HEK293 (cell line): ENCODE measurements at regions of chr13 and their contacts with region 1.

Region 1: DNA sequence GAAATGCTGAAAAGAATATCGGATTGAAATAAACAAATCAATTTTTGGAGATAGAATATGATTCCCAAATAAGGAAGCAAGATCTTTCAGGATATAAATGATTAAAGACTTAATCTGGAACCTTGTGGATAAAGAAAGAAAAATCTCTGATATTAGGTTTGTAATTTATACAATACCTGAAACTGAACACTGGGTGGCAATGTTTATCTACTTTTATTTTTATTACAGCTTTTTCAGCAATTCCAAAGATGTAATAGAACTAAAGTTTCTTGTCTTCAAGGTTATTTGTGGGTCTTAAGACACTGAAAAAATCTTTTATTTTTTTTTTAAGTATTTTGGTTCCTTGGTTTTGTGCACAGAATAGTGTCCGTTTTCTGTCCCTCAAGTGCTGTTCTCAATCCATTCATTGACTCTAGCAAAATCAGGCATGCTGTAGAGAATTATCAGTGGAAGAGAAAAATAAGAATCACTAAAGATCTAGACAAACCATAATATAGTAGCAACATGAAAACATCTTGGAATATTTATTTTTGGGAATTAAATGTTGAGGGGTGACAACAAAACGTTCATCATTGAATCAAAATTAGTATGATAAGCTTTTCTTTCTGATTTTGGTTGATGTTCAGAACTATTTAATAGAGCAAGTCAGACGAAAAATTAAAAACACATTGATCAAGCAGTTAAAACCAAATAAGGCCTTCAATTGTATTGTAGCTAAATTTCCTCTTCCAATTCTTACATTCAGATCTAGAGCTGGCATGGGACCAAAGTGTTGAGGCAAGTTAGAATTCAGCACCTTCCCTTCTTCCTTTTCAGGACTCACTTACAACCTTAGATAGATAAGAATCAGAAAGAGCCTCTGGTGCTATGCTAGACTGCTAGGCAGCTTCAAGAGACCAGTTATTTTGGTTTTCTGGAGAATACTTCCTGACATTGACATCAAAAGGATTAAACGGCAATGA is 704.4 kb upstream of the PCDH20 start:
- H3K4me3 ChIP-seq: no peak overlapping the region
- H3K27ac ChIP-seq: no peak overlapping the region
- H3K4me1 ChIP-seq: no peaks in the 10 kb centered on the region
- CTCF ChIP-seq: no peak

Region 2: GRCh38 chr13:61900033-61900432 is 220.0 kb before region 1 on chr13:
- CTCF ChIA-PET with region 1: no interaction called
- POLR2A ChIA-PET with region 1: no interaction called
- H3K4me3 ChIP-seq: no peak overlapping the region
- H3K27ac ChIP-seq: no peak overlapping the region
- H3K4me1 ChIP-seq: no peaks in the 10 kb centered on the region
- CTCF ChIP-seq: no peak

Region 3: DNA sequence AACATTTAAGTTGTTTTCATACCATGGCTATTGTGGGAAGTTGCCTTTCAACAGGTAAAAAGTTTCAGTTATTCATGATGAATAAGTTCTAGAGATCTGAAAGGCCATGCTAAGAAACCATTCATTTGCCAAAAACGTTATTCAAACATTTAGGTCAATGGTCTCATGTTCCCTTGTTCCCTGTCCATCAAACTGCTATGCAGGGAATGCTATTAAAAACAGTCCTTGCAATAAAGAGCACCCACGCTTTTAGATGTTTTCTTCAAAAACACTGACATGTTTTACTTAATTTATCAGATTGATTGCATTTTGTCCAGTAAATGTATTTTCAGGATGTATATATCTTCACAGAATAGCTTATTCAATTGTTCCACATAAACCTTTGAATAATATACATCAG is 131.2 kb before region 1 on chr13:
- CTCF ChIA-PET with region 1: no interaction called
- POLR2A ChIA-PET with region 1: no interaction called
- H3K4me3 ChIP-seq: no peak overlapping the region
- H3K27ac ChIP-seq: no peak overlapping the region
- H3K4me1 ChIP-seq: no peaks in the 10 kb centered on the region
- CTCF ChIP-seq: no peak

Region 4: DNA sequence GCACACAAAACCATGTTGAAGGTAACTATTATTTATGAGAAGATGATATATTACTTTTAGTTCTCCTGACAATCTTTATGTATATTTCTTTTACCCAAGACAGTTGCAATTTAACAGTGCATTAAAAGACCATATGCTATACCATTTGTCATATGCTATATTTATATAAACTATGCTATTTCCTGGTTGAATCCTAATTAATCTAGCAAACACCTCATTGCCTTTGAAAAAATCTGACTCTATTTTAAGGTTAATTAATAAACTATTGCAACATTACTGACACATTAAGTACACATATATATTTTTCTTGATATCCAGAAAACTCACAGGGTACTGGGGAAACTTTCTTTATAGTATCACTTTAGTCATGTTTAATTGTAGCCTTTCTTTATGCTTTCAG is 55.0 kb before region 1 on chr13:
- CTCF ChIA-PET with region 1: no interaction called
- POLR2A ChIA-PET with region 1: no interaction called
- H3K4me3 ChIP-seq: no peak overlapping the region
- H3K27ac ChIP-seq: no peak overlapping the region
- H3K4me1 ChIP-seq: no peaks in the 10 kb centered on the region
- CTCF ChIP-seq: no peak

Region 5: DNA sequence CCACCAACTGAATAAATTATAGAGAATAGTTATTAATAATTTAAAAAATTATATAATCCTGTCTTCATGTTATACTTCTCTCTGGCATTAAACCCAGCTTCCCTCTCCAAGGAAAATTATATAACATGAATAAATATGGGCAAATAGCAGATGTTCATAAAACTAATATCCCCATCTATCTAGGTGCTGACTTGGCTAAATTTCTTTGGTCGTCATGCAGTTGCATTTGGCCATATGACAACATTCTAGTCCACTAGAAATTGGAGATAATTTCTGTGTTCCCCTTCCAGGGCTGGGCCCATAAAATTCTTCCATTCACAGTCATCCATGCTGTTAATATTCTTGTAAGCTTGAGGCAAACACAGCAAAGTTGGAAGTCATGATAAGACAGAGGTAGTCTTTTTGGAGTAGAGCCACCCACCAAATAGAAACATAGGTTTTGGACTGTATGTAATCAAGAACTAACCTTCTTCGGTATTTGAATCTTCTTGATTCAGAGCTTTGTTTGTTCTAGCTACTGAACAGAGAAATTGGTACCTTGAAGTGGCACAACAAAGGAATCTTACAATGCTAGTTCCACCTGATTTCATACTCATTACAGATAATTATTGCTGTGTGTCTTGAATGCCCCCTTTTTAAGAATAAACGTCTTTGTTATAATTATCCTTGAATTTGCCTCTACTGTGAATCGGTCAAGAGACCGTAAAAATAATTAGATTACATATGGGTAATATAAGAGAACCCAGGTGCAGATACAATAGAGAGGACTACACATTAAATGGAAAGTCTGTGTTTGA is 25.8 kb before region 1 on chr13:
- CTCF ChIA-PET with region 1: no interaction called
- POLR2A ChIA-PET with region 1: no interaction called
- H3K4me3 ChIP-seq: no peak overlapping the region
- H3K27ac ChIP-seq: no peak overlapping the region
- H3K4me1 ChIP-seq: no peaks in the 10 kb centered on the region
- CTCF ChIP-seq: no peak

Region 6: DNA sequence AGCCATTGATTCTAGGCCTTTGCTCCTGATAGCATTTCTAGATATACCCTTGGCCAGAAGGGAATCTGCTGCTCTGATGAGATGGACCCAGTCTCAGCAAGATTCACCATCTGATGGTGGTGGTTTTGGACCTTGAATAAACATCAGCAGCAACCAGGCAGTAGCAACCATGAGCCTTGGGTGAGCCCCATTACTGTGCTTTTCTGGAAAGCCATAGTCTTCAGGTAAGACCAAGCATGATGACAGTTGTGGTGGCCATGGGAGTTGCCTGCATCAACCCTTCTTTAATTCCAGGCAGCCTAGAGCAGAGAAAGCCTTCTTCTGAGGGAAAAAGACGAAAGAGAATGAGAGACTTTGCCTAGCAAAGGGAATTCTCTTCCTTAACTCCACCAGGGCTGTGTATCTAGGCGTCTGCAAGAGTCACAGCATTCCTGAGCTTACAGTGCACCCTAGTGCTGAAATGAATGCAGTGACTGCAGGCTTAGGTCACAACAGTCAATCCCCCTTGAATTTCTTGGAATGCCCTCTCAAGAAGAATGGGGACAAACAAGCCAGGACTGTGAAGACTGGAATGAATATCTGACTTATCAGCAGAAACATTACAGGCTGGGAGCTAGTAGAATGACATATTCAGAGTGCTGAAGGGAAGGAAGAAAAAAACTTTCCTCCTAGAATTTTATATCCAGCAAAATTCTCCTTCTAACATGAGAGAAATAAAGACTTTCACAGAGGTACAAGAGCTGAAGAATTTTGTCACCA is 238.0 kb after region 1 on chr13:
- CTCF ChIA-PET with region 1: interaction called, 17 read pairs
- POLR2A ChIA-PET with region 1: no interaction called
- H3K4me3 ChIP-seq: no peak overlapping the region
- H3K27ac ChIP-seq: no peak overlapping the region
- H3K4me1 ChIP-seq: no peaks in the 10 kb centered on the region
- CTCF ChIP-seq: no peak